A549 (cell line): ENCODE measurements at regions of chr17 and their contacts with region 1.

Region 1: GRCh38 chr17:38735161-38735997 is 5.2 kb downstream of the CISD3 start:
- DNase-seq: peak; percentile 50 to 93
- ATAC-seq: peak in 1 of 2 experiments; percentile 32; a peak in 3 of 6 replicates
- H3K4me3 ChIP-seq: no peak overlapping the region
- H3K27ac ChIP-seq: peak overlapping the region in 1 of 2 experiments; percentile 34; a peak in 1 of 6 replicates
- H3K4me1 ChIP-seq: peaks cover 35% of the 10 kb centered on the region
- CTCF ChIP-seq: peak; percentile 96
- EP300 ChIP-seq: no peak
- POLR2A ChIP-seq: no peak
- RAD21 ChIP-seq: peak; percentile 71 to 78

Region 2: GRCh38 chr17:38685491-38685890 is 49.9 kb before region 1 on chr17:
- CTCF ChIA-PET with region 1: interaction called, 51 read pairs
- POLR2A ChIA-PET with region 1: interaction called, 3 read pairs
- DNase-seq: no peak
- ATAC-seq: no peak; a peak in 1 of 6 replicates
- H3K4me3 ChIP-seq: no peak overlapping the region
- H3K27ac ChIP-seq: no peak overlapping the region
- H3K4me1 ChIP-seq: no peaks in the 10 kb centered on the region
- CTCF ChIP-seq: no peak
- EP300 ChIP-seq: no peak
- POLR2A ChIP-seq: no peak
- RAD21 ChIP-seq: no peak

Region 3: GRCh38 chr17:38702166-38702899 is 33.0 kb before region 1 on chr17:
- CTCF ChIA-PET with region 1: interaction called, 64 read pairs
- POLR2A ChIA-PET with region 1: no interaction called
- DNase-seq: peak; percentile 90 to 94
- ATAC-seq: peak; percentile 67 to 78
- H3K4me3 ChIP-seq: peak overlapping the region; percentile 56
- H3K27ac ChIP-seq: peak overlapping the region; percentile 84 to 96
- H3K4me1 ChIP-seq: peaks cover 47% of the 10 kb centered on the region
- CTCF ChIP-seq: no peak
- EP300 ChIP-seq: no peak; a peak in 1 of 5 replicates
- POLR2A ChIP-seq: peak; percentile 85
- RAD21 ChIP-seq: no peak

Region 4: DNA sequence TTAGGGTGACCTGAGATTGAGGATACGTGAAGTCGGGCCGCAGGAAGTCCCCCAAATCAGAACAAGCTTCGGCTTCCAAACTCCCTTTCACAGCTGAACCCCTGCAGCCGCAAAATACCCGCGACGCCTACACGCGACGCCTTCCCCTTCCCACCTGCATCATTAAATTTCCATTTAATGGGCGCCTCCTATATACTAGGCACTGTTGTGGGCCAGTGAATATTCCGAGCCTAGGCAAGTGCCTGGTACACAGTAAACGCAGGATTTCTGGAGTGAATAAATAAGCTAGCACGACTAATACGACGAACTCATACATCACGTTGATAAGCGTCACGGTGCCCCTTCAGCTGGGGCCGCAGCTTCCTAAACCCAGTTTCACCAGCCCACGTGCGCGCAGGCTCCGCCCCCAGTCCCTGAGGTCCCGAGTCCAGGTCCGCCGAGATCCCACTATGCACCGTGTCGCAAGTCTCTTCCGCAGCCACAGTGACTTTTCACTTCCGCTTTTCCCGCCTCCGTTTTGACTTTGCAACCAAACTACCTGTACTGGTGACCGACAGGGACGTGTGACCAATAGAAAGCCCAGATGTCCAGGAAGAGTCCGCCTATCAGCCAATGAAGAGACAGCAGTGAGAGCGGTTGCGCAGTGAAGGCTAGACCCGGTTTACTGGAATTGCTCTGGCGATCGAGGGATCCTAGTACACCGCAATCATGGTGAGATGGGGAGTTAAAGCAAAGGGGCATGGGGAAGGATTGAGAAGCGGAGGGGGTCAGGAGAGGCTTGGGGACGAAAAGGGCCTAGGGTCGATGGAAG is 16.9 kb after region 1 on chr17 and contains the start of gene PSMB3:
- CTCF ChIA-PET with region 1: interaction called, 107 read pairs
- POLR2A ChIA-PET with region 1: interaction called, 8 read pairs
- DNase-seq: peak; percentile 100
- ATAC-seq: peak; percentile 70 to 85
- H3K4me3 ChIP-seq: peak within 1 kb of the TSS; percentile 96
- H3K27ac ChIP-seq: peak within 1 kb of the TSS; percentile 90 to 98
- H3K4me1 ChIP-seq: peaks cover 22% of the 10 kb centered on the region
- CTCF ChIP-seq: no peak
- EP300 ChIP-seq: no peak
- POLR2A ChIP-seq: peak; percentile 64
- RAD21 ChIP-seq: no peak
- polyA plus RNA-seq, gene PSMB3: 417 and 467 TPM in 2 replicates

Region 5: DNA sequence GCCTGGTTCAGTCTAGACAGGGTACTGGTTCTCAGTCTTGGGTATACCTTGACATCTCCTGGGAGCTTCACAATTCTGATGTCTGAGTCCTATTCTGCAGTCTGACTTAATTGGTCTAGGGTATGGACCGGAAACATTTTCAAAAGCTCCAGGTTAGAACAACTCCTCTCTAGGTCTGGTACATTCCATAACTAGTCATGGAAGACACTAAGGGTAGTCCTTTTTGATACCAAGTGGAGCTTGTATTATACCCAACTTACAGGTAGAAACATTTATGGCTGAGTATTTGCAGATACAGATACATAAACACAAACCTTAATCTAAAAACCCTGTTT is 113.1 kb after region 1 on chr17:
- CTCF ChIA-PET with region 1: no interaction called
- POLR2A ChIA-PET with region 1: no interaction called
- DNase-seq: no peak
- ATAC-seq: no peak
- H3K4me3 ChIP-seq: no peak overlapping the region
- H3K27ac ChIP-seq: no peak overlapping the region
- H3K4me1 ChIP-seq: peaks cover 21% of the 10 kb centered on the region
- CTCF ChIP-seq: no peak
- EP300 ChIP-seq: no peak
- POLR2A ChIP-seq: no peak
- RAD21 ChIP-seq: no peak

Region 6: DNA sequence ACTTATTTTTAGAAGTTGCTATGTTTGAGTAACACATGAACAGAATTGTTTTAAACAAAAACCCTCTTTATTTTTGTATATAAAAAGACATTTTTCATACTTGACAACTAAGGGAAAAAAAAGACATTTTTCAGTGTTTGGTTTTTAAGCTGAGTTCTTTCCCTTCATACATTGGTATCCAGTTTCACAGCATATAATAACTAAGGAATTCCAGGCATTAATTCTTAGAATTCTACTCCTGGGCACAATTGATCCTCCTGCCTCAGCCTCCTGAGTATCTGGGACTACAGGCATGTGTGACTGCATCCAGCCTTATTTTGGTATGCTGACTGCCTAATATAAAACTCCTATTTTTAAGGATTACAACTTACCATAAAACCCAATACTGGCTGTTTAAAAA is 223.4 kb after region 1 on chr17:
- CTCF ChIA-PET with region 1: no interaction called
- POLR2A ChIA-PET with region 1: no interaction called
- DNase-seq: no peak
- ATAC-seq: no peak
- H3K4me3 ChIP-seq: no peak overlapping the region
- H3K27ac ChIP-seq: no peak overlapping the region
- H3K4me1 ChIP-seq: peaks cover 9% of the 10 kb centered on the region
- CTCF ChIP-seq: no peak
- EP300 ChIP-seq: no peak
- POLR2A ChIP-seq: no peak
- RAD21 ChIP-seq: no peak